Dendritic cell treated with granulocyte-macrophage colony-stimulating factor and Interleukin-4, amounts not matched to agents 40 ng/mL and 50 ng/mL, for 4 days (primary cell): ENCODE measurements at regions of chr16 and their contacts with region 1.

Region 1: GRCh38 chr16:87387942-87388817 is 4.0 kb upstream of the MAP1LC3B start:
- H3K4me3 Mint-ChIP-seq: peak overlapping the region; percentile 45
- H3K27ac Mint-ChIP-seq: peak overlapping the region; percentile 99
- H3K4me1 Mint-ChIP-seq: peaks cover 49% of the 10 kb centered on the region
- H3K27me3 Mint-ChIP-seq: no peaks in the 10 kb centered on the region

Region 2: DNA sequence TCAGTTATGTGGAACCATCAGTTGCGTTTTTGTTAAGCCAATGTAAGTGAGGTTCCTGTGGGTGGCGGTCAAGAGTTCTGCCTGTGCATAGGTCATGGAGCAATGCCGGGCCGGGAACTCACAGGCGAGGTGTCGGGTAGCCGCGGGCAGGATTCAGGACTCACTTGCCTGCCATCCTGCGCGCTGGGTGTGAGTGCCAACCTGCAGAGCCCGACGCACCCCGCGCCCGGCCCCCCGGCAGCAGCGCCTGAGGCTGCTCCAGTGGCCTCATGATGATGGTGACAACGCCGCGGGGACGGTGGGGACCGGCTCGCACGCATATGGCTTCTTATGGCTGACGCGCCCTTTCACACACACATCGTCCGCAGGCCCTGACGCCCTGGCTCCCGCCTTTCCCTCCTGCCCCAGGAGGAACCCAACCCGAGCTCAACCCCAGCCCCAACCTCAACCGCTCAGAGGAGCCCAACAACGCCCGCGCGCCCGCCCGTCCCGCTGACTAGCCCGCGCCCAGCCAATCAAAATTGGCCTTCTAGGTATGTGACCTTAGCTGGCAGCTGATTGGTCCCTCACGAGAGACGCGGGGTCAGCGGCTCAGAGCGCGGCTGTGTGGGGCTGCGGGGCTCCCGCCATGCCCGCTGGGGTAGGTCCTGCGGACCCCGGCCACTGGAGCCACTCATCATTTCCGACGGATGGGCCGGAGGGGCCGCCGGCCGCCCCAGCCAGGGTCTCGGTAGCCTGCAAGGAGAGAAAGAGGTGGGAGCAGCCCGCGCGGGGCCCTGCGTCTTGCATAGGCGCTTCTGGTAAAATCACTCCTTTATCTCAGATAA is 71.0 kb before region 1 on chr16 and contains the start of gene C16orf95:
- intact Hi-C with region 1: loop called (anchors 5 kb)
- H3K4me3 Mint-ChIP-seq: peak within 1 kb of the TSS; percentile 89
- H3K27ac Mint-ChIP-seq: peak within 1 kb of the TSS; percentile 95
- H3K4me1 Mint-ChIP-seq: peaks cover 18% of the 10 kb centered on the region
- H3K27me3 Mint-ChIP-seq: peaks cover 3% of the 10 kb centered on the region

Region 3: DNA sequence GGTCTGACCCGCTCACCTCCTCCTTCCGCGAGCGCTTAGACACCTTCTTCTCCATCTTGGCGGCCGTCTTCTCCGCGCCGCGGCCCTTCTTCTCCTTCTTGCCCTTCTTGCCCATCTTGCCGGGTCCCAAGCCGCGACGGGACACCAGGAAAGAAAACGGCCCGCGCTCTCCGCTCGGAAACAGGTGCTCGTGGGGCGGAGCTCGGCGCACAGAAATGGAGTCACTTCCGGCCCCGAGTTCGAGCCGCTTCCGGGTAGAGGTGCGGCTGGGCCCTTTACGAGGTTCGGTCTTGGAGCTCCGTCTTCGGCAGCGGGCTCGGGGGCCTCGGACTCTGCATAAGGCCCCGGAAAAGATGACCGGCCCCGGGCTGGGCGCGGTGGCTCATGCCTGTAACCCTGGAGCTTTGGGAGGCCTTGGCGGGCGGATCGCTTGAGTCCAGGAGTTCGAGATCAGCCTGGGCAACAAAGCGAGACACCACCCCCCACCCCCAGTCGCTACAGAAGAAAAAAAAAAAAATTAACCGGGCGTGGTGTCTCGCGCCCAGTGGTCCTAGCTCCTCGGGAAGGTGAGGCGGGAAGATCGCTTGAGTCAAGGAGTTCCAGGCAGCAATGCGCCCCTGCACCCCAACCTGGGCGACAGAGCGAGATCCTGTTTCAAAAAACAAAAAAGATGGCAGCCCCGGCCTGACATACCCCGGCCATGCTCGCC is 377.8 kb after region 1 on chr16 and contains the start of gene KLHDC4:
- intact Hi-C with region 1: loop called (anchors 10 kb)
- H3K4me3 Mint-ChIP-seq: peak within 1 kb of the TSS; percentile 99
- H3K27ac Mint-ChIP-seq: peak within 1 kb of the TSS; percentile 98
- H3K4me1 Mint-ChIP-seq: peaks cover 32% of the 10 kb centered on the region
- H3K27me3 Mint-ChIP-seq: peaks cover 12% of the 10 kb centered on the region